Activated B cell treated with CpG ODN at 0.5 μM for 24 hours (primary cell): ENCODE measurements at regions of chr6 and their contacts with region 1.

Region 1: DNA sequence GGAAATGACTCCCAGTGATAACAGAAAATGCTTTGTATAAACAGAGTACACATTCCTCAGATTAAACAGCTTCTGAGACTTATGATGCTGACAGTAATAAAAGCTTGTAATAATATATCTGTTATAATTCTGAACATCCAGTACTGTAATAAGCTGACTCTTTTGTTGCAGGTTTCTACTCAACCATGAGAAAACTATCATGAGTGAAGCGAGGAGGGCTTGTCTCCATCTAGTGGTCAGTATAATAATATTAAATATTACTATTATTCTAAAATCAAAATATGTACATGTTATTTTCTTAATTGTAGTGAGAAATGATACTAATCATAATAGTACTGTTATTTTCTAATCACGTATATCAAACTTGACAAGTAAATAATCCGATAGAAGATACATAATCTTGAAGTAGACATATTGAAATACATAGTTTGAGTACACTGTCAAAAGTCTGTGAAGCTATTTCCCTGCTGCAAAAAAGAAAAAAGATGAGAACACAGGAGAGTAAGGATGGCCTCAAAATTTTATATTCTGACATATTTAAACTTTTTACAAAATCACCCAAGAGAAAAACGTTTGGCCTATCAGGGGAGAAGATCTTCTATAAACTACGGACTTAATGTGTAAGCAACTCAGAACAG is 183.1 kb downstream of the MOXD1 start:
- DNase-seq: no peak
- ATAC-seq: no peak
- H3K4me3 Mint-ChIP-seq: no peak overlapping the region
- H3K27ac Mint-ChIP-seq: no peak overlapping the region
- H3K4me1 Mint-ChIP-seq: no peaks in the 10 kb centered on the region
- H3K27me3 Mint-ChIP-seq: no peaks in the 10 kb centered on the region
- CTCF ChIP-seq: peak; percentile 7

Region 2: DNA sequence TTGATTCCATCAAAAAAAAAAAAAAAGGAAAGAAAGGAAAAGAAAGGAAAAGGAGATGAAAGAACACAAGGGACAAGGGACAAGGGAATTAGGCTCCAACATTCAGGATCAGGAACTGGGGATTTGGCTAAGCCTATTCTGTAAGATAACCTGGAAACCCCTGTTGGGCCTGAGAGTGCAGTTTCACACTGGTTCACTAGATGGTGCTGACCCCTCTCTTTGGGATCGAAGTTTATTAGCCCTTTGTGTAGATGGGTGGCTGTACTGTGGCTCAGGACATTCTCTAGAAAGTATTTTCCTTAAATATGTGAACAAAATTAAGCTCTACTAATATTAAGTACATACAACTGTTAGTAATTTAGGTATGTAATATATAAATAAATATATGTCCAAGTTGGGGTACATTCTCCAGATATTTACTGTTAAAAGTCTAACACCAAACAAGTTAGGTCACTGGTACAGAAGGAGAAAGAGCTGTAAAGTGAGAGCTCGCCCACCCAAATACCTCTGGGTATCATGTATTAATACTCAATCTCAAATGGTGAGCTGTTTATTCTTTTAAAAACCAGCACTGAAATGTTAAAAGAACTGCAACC is 523.2 kb before region 1 on chr6:
- CTCF ChIA-PET with region 1: interaction called, 5 read pairs
- POLR2A ChIA-PET with region 1: no interaction called
- intact Hi-C with region 1: loop called (anchors 5 kb)
- DNase-seq: no peak
- ATAC-seq: peak; percentile 97
- H3K4me3 Mint-ChIP-seq: no peak overlapping the region
- H3K27ac Mint-ChIP-seq: no peak overlapping the region
- H3K4me1 Mint-ChIP-seq: peaks cover 23% of the 10 kb centered on the region
- H3K27me3 Mint-ChIP-seq: no peaks in the 10 kb centered on the region
- CTCF ChIP-seq: no peak

Region 3: GRCh38 chr6:131914967-131915751 is 303.0 kb before region 1 on chr6:
- CTCF ChIA-PET with region 1: interaction called, 24 read pairs
- POLR2A ChIA-PET with region 1: no interaction called
- intact Hi-C with region 1: loop called (anchors 1 kb)
- DNase-seq: no peak
- ATAC-seq: peak; percentile 75
- H3K4me3 Mint-ChIP-seq: no peak overlapping the region
- H3K27ac Mint-ChIP-seq: no peak overlapping the region
- H3K4me1 Mint-ChIP-seq: peaks cover 26% of the 10 kb centered on the region
- H3K27me3 Mint-ChIP-seq: peaks cover 30% of the 10 kb centered on the region
- CTCF ChIP-seq: peak; percentile 29

Region 4: GRCh38 chr6:131923356-131923755 is 294.8 kb before region 1 on chr6:
- CTCF ChIA-PET with region 1: interaction called, 41 read pairs
- POLR2A ChIA-PET with region 1: no interaction called
- intact Hi-C with region 1: loop called (anchors 1 kb)
- DNase-seq: no peak
- ATAC-seq: peak; percentile 50
- H3K4me3 Mint-ChIP-seq: no peak overlapping the region
- H3K27ac Mint-ChIP-seq: no peak overlapping the region
- H3K4me1 Mint-ChIP-seq: no peaks in the 10 kb centered on the region
- H3K27me3 Mint-ChIP-seq: peaks cover 4% of the 10 kb centered on the region
- CTCF ChIP-seq: no peak

Region 5: DNA sequence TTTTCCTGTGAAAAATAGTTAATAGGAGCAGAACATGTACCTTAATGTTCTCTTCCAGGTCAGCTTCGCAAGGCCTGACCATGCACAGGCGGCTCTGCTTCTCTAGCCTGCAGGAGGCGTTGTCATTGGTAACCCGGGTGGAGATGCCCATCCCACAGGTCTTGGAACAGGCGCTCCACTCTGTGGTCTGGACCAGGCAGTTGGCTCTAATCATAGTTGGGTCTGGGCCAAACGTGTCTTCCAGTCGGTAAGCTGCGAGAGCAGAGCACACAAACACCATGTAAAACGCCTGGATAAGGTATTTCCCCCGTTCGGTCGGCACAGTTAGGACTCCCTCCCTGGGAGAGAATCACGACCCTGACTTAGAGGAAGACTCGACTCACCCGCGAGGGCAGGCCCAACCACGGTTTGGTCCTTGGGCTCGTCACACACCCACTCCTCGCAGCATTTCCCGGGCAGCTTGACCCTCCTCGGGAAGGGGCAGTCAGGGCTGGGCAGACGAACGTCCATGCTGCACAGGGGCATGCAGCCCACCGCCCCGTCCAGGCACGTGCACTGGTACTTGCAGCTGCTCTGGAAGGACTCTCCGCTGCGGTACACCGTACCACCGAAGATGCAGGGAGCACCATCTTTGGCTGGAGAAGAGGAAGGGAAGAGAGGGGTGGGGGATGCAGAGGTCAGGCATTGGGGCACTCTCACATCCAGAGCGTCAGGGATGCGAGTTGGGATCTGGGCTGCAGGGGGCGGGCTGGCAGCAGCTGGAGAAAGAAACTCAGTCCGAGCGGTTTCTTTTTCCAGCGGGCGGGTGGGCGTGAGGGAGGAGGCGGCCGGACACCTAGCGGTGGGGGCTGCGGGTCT is 268.0 kb before region 1 on chr6:
- CTCF ChIA-PET with region 1: interaction called, 6 read pairs
- POLR2A ChIA-PET with region 1: no interaction called
- intact Hi-C with region 1: loop called (anchors 10 kb)
- DNase-seq: peak; percentile 21
- ATAC-seq: peak; percentile 72
- H3K4me3 Mint-ChIP-seq: peak overlapping the region; percentile 86
- H3K27ac Mint-ChIP-seq: no peak overlapping the region
- H3K4me1 Mint-ChIP-seq: peaks cover 18% of the 10 kb centered on the region
- H3K27me3 Mint-ChIP-seq: peaks cover 36% of the 10 kb centered on the region
- CTCF ChIP-seq: no peak

Region 6: GRCh38 chr6:132063738-132064137 is 154.4 kb before region 1 on chr6:
- CTCF ChIA-PET with region 1: no interaction called
- POLR2A ChIA-PET with region 1: no interaction called
- intact Hi-C with region 1: no loop called
- DNase-seq: no peak
- ATAC-seq: no peak
- H3K4me3 Mint-ChIP-seq: no peak overlapping the region
- H3K27ac Mint-ChIP-seq: no peak overlapping the region
- H3K4me1 Mint-ChIP-seq: no peaks in the 10 kb centered on the region
- H3K27me3 Mint-ChIP-seq: no peaks in the 10 kb centered on the region
- CTCF ChIP-seq: no peak

Region 7: DNA sequence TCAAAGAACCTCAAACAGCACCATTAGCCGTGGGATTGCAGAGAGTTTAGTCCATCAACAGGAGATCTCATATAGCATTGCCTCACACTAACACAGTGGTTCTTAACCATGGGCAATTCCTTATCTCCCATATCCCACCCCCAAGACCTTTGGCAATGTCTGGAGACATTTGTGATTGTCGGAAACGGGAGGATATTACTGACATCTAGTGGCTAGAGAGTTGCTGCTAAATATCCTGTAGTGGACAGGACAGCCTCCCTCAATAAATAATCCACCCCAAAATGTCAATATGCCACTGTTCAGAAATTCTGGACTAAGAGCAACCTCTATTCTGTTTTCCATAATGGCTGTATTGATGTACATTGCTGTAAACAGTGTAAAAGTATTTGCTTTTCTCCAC is 56.9 kb before region 1 on chr6:
- CTCF ChIA-PET with region 1: no interaction called
- POLR2A ChIA-PET with region 1: no interaction called
- intact Hi-C with region 1: loop called (anchors 5 kb)
- DNase-seq: no peak
- ATAC-seq: no peak
- H3K4me3 Mint-ChIP-seq: no peak overlapping the region
- H3K27ac Mint-ChIP-seq: no peak overlapping the region
- H3K4me1 Mint-ChIP-seq: peaks cover 26% of the 10 kb centered on the region
- H3K27me3 Mint-ChIP-seq: no peaks in the 10 kb centered on the region
- CTCF ChIP-seq: no peak

Region 8: GRCh38 chr6:132202574-132202973 is 15.6 kb before region 1 on chr6:
- CTCF ChIA-PET with region 1: no interaction called
- POLR2A ChIA-PET with region 1: no interaction called
- intact Hi-C with region 1: no loop called
- DNase-seq: no peak
- ATAC-seq: no peak
- H3K4me3 Mint-ChIP-seq: no peak overlapping the region
- H3K27ac Mint-ChIP-seq: no peak overlapping the region
- H3K4me1 Mint-ChIP-seq: no peaks in the 10 kb centered on the region
- H3K27me3 Mint-ChIP-seq: no peaks in the 10 kb centered on the region
- CTCF ChIP-seq: no peak

Region 9: GRCh38 chr6:132322398-132322797 is 104.2 kb after region 1 on chr6:
- CTCF ChIA-PET with region 1: no interaction called
- POLR2A ChIA-PET with region 1: no interaction called
- intact Hi-C with region 1: no loop called
- DNase-seq: no peak
- ATAC-seq: no peak
- H3K4me3 Mint-ChIP-seq: no peak overlapping the region
- H3K27ac Mint-ChIP-seq: no peak overlapping the region
- H3K4me1 Mint-ChIP-seq: peaks cover 7% of the 10 kb centered on the region
- H3K27me3 Mint-ChIP-seq: no peaks in the 10 kb centered on the region
- CTCF ChIP-seq: no peak